Right cardiac atrium (tissue), 5 donors: ENCODE measurements at regions of chr2 and their contacts with region 1.

Region 1: GRCh38 chr2:149597668-149598326 is 10.2 kb upstream of the MMADHC start:
- DNase-seq: peak in 2 of 3 donors; percentile 38 to 45
- ATAC-seq: peak; percentile 90 to 91
- H3K4me3 ChIP-seq: peak overlapping the region; percentile 26
- H3K27ac ChIP-seq: no peak overlapping the region
- H3K4me1 ChIP-seq: no peaks in the 10 kb centered on the region
- H3K27me3 ChIP-seq: no peaks in the 10 kb centered on the region

Region 2: DNA sequence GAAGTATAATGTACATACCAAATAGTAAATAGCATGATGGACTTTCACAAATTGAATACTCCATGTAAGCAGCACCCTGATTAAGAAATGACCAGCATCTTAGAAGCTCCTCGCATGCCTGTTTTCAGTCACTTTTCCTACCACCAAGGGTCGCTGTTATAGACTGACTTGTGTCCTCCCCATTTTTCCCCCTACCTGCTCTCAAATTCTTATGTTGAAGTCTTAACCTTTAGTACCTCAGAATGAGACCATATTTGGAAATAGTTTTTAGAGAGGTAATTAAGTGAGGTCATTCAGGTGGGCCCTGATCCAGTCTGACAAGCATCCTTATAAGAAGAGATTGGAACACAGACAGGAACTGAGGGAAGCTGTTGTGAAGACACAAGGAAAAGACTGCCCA is 141.5 kb before region 1 on chr2:
- intact Hi-C with region 1: no loop called
- DNase-seq: no peak
- ATAC-seq: no peak
- H3K4me3 ChIP-seq: no peak overlapping the region
- H3K27ac ChIP-seq: no peak overlapping the region
- H3K4me1 ChIP-seq: no peaks in the 10 kb centered on the region
- H3K27me3 ChIP-seq: no peaks in the 10 kb centered on the region

Region 3: GRCh38 chr2:149773006-149773405 is 175.2 kb after region 1 on chr2:
- intact Hi-C with region 1: loop called in 1 of 4 experiments (anchors 10 kb)
- DNase-seq: no peak
- ATAC-seq: no peak
- H3K4me3 ChIP-seq: no peak overlapping the region
- H3K27ac ChIP-seq: no peak overlapping the region
- H3K4me1 ChIP-seq: no peaks in the 10 kb centered on the region
- H3K27me3 ChIP-seq: no peaks in the 10 kb centered on the region

Region 4: DNA sequence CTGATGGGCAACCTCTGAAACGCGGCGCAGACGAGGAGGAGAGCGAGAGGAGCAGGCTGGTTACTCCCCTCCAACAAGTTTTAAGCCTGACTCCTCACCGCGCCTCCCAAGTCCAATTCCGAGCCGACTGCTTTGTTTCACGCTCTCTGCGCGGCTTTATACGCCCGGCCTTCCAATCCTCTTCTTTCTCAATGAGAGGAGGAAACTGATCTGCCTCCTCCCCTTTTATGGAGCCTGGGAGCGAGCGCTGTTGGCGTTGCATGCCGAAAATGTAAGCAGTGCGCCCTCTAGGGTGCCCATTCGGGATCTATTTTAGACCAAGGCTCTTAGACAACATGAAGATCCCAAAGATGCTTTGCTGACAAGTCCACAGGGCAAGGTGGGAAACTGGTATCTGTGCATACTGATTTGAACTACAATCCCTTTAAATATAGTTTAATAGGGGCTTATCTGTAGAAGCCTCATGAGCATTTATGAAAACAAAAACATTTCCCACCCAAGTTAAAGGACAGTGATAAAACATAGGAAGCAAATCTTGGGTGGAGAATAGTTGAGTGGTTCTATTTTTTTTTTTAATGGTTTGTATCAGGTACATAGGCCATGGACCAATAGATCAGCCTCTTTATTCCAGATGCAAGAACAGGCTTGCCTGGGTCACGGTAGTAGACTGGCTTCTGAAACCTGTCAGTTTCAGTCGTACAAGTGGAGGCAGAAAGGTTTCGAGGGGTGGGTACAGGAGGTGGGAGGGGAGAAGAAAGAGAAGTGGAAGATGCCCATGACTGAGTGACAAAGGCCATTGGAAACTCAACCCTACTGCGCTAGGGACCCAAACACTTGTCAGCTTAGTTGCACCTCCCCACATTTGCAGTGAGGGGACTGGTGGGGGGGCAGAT is 890.0 kb after region 1 on chr2 and contains the start of gene RND3:
- intact Hi-C with region 1: loop called in 3 of 4 experiments (anchors 5 to 10 kb)
- DNase-seq: peak; percentile 96 to 98 (median 97)
- ATAC-seq: peak; percentile 87 to 88
- H3K4me3 ChIP-seq: peak within 1 kb of the TSS; percentile 86
- H3K27ac ChIP-seq: peak within 1 kb of the TSS; percentile 89
- H3K4me1 ChIP-seq: no peaks in the 10 kb centered on the region
- H3K27me3 ChIP-seq: no peaks in the 10 kb centered on the region
- total RNA-seq, gene RND3: 9.1 to 32.7 (median 16.1) TPM

Region 5: DNA sequence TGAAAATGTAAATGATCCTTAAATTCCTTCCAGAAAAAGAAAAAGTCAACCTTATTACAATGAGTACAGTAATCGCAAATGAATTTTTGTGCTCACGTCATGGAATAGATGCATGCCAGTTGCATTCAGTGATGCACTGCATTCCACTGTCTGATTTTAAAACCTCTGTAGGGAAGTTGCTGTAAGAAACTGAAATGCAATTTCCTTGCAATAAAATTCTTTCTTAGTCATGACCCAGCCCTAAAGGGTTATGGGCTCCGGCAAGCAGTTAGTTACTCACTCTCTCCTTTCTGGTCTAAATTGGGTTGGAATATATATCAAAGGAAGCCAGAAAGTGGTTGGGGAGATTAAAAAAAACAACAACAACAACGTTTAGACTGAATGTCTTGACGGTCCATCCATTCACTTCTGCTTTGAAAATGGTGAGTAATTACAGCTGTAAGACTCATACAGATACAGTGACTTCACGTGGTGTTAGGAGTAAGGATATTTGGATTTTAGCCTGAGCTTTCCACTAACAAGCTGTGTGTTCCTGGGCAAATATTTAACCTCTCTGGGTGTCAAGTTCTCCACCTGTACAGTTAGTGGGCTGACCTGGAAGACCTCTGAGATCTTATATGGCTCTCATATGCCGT is 898.3 kb after region 1 on chr2:
- intact Hi-C with region 1: loop called in 1 of 4 experiments (anchors 10 kb)
- DNase-seq: no peak
- ATAC-seq: no peak
- H3K4me3 ChIP-seq: no peak overlapping the region
- H3K27ac ChIP-seq: no peak overlapping the region
- H3K4me1 ChIP-seq: no peaks in the 10 kb centered on the region
- H3K27me3 ChIP-seq: no peaks in the 10 kb centered on the region

Region 6: DNA sequence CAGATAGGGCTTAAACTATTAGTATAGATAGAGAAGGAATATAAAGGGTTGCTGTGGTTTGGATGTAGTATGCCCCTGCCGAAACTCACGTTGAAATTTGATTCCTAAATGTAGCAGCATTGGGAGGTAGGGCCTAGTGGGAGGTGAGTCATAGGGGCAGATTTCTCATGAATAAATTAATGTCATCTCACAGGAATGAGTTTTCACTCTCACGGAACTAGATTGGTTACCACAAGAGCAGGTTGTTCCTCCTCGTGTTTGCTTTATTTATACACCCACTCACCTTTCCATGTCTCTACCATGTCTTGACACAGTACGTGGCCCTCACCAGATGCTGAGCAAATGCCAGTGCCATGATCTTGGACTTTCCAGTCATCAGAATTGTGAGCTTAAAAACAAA is 1445.7 kb after region 1 on chr2:
- intact Hi-C with region 1: loop called in 1 of 4 experiments (anchors 10 kb)
- DNase-seq: no peak
- ATAC-seq: no peak
- H3K4me3 ChIP-seq: no peak overlapping the region
- H3K27ac ChIP-seq: no peak overlapping the region
- H3K4me1 ChIP-seq: no peaks in the 10 kb centered on the region
- H3K27me3 ChIP-seq: no peaks in the 10 kb centered on the region

Region 7: GRCh38 chr2:151238527-151239487 is 1641.0 kb after region 1 on chr2:
- intact Hi-C with region 1: loop called in 3 of 4 experiments (anchors 5 to 10 kb)
- DNase-seq: peak; percentile 62 to 69 (median 69)
- ATAC-seq: peak; percentile 88 to 91
- H3K4me3 ChIP-seq: no peak overlapping the region
- H3K27ac ChIP-seq: no peak overlapping the region
- H3K4me1 ChIP-seq: no peaks in the 10 kb centered on the region
- H3K27me3 ChIP-seq: no peaks in the 10 kb centered on the region